ENCODE measurements at regions of chr1 and their contacts with region 1.

Region 1: GRCh38 chr1:203702130-203702577 is 62.8 kb upstream of the LAX1 start:
- DNase-seq: peak; percentile 40
- H3K4me3 ChIP-seq: no peak overlapping the region
- CTCF ChIP-seq: peak; percentile 75

Region 2: DNA sequence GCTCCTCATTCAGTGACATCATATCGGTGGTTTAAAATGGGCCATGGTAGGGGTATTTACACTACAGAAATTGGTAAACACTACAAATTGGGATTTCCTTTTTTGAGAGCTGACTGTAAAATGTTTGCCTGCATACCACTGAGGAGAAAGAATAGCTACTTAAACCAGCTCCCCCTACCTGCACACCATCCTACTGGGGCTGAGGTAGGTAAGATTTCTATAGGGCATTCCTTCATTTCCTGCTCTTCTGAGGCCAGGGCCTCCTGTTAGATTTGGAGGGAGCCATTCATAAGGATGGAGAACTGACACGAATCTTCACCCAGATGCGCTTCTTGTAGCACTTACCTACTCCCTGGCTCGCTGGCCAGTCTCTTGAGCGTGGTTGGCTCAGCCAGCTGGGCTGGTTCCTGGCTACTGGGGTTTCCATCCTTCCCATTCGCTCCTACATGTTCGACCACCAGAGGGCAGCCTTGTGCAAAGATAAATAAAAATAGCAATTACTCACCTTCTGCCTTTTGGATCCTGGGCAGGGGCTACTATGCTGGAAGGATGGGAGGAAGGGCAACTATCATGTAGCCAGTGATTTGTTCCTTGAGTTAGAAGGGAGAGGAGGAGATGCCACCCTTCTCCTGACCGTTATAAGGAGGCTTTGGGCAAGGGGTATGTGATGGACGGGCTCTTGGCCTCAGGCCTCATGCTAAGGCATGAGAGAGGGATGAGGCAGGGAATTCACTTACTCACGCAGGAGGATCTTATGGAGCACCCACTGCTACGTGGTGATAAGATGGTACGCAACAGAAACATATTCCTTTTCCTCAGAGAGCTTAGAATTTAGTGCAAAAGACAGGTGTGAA is 197.5 kb before region 1 on chr1:
- in situ Hi-C with region 1: loop called (anchors 25 kb)
- DNase-seq: peak; percentile 57
- H3K4me3 ChIP-seq: no peak overlapping the region
- CTCF ChIP-seq: peak; percentile 77

Measured in astrocyte of the cerebellum (primary cell).